ENCODE measurements at regions of chr1 and their contacts with region 1.

Region 1: DNA sequence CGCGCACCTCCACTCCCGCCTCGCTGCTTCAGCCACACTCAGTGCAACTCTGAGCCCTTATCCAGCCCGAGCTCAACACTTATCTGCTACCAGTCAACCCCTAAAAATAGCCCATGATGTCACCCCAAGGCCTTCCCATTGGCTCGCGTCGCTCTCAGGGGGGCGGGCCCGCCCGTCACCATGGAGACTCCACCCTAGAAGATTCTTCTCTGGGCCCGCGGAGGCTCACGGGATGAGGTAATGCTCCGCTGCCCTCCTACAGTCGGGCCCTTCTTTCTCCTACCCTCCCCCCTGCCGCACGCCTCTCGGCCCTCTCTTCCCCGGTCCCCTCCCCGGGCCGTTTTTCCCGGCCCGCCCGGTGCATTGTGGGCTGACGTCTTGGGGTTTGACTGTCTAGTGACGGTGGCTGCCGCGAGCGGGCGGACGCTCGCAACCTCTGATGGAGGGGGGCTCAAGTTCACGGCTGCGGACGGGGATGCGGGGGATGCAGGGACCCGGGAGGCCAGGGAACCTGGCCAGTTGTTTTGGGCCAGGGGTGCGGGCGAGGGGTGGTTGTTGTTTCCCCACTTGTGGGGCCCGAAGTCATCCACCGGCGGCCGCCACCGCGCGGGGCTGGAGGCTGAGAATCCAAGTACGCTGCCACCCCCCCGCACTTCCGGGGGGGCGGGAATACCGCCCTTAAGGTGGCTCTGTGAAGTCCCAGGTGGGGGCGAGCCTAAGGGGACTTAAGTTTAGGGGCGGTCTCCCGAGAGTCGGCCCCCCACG is at the start of gene JUN:
- DNase-seq: peak; percentile 98
- H3K4me3 Mint-ChIP-seq: peak within 1 kb of the TSS; percentile 97
- H3K27ac Mint-ChIP-seq: peak within 1 kb of the TSS; percentile 99
- H3K4me1 Mint-ChIP-seq: peaks cover 41% of the 10 kb centered on the region
- H3K27me3 Mint-ChIP-seq: peaks cover 13% of the 10 kb centered on the region
- CTCF ChIP-seq: no peak
- total RNA-seq, gene JUN: 76.5 and 89.3 TPM in 2 replicates

Region 2: GRCh38 chr1:58619286-58620054 is 164.7 kb before region 1 on chr1:
- CTCF ChIA-PET with region 1: no interaction called
- intact Hi-C with region 1: no loop called
- DNase-seq: no peak
- H3K4me3 Mint-ChIP-seq: peak overlapping the region; percentile 57
- H3K27ac Mint-ChIP-seq: peak overlapping the region; percentile 82
- H3K4me1 Mint-ChIP-seq: peaks cover 63% of the 10 kb centered on the region
- H3K27me3 Mint-ChIP-seq: no peaks in the 10 kb centered on the region
- CTCF ChIP-seq: no peak

Region 3: GRCh38 chr1:58721247-58721820 is 62.8 kb before region 1 on chr1:
- CTCF ChIA-PET with region 1: no interaction called
- intact Hi-C with region 1: no loop called
- DNase-seq: no peak
- H3K4me3 Mint-ChIP-seq: no peak overlapping the region
- H3K27ac Mint-ChIP-seq: no peak overlapping the region
- H3K4me1 Mint-ChIP-seq: peaks cover 9% of the 10 kb centered on the region
- H3K27me3 Mint-ChIP-seq: no peaks in the 10 kb centered on the region
- CTCF ChIP-seq: no peak

Region 4: DNA sequence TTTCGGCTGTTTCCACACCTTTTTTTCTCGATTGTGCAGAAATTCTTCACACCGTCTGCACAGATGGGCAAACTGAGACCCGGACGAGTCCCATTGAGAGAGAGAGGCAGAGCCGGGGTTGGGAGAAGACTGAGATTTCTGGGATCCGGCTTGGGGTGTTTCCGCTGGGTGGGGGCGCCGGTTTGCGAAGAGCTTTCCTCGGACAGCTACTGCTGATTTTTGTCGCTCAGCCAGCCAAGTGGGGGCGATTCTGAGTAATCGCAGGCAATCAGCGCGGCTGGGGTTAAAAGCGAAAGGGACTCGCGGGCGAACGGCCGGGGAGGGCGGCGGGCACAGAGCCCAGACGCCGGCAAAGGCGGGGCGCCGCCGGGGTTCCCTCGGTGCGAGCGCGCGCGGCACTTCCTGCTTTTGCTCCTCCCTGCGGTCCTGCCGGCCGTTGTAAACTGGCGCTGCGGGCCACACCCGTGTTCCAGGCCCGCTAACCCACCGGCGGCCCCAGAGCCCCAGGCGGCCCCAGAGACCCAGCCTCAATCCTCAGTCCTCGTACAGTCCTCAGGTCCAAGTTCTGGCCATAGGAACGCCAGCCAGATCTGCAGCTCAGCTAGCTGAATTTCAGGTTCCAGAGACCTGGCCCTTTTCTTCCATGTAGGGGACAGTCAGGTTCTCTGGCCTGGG is 32.0 kb after region 1 on chr1:
- CTCF ChIA-PET with region 1: interaction called, 10 read pairs
- intact Hi-C with region 1: loop called (anchors 1 kb)
- DNase-seq: peak; percentile 93
- H3K4me3 Mint-ChIP-seq: peak overlapping the region; percentile 85
- H3K27ac Mint-ChIP-seq: peak overlapping the region; percentile 98
- H3K4me1 Mint-ChIP-seq: peaks cover 52% of the 10 kb centered on the region
- H3K27me3 Mint-ChIP-seq: no peaks in the 10 kb centered on the region
- CTCF ChIP-seq: no peak

Region 5: DNA sequence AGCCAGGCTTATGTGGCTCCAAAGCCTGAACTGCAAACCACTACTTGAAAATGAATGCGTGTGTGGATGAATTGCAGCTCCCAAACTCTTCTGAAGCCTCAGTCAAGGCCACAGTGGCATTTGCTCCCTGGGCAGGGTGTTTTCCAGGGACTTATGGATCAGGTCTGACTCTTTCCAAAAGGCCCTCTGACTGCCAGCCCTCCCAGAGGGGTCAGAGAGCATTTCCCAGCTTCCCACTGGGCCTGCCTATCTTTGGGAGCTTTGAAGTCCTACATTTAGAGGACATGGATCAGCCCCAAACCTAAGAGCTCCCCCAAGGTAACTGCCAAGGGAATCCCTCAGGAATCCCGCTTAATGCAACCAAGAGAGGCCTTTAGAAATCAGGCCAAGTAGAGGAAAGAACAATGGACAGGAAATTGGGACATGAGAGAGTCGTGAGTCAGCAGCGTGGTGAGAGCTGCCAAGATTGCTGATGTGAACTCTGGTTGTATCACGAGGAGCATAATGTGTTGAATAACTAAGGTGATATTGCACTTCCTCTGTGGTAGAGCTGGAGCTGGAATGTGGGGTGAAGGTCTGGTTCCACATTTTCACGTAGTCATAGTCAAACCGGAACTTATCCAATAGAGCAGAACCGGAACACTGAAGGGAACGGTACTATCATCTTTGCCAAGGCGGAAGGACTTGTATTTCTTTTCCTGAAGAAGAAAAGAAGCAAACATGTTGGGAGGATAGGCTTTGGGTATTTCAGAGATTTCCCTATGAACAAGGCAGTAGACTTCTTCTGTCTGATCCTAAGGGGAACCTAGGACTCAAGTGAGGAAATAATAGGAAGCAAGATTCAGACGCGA is 99.1 kb after region 1 on chr1:
- CTCF ChIA-PET with region 1: interaction called, 3 read pairs
- intact Hi-C with region 1: loop called (anchors 1 kb)
- DNase-seq: peak; percentile 74
- H3K4me3 Mint-ChIP-seq: peak overlapping the region; percentile 37
- H3K27ac Mint-ChIP-seq: peak overlapping the region; percentile 94
- H3K4me1 Mint-ChIP-seq: peaks cover 72% of the 10 kb centered on the region
- H3K27me3 Mint-ChIP-seq: no peaks in the 10 kb centered on the region
- CTCF ChIP-seq: no peak

Region 6: DNA sequence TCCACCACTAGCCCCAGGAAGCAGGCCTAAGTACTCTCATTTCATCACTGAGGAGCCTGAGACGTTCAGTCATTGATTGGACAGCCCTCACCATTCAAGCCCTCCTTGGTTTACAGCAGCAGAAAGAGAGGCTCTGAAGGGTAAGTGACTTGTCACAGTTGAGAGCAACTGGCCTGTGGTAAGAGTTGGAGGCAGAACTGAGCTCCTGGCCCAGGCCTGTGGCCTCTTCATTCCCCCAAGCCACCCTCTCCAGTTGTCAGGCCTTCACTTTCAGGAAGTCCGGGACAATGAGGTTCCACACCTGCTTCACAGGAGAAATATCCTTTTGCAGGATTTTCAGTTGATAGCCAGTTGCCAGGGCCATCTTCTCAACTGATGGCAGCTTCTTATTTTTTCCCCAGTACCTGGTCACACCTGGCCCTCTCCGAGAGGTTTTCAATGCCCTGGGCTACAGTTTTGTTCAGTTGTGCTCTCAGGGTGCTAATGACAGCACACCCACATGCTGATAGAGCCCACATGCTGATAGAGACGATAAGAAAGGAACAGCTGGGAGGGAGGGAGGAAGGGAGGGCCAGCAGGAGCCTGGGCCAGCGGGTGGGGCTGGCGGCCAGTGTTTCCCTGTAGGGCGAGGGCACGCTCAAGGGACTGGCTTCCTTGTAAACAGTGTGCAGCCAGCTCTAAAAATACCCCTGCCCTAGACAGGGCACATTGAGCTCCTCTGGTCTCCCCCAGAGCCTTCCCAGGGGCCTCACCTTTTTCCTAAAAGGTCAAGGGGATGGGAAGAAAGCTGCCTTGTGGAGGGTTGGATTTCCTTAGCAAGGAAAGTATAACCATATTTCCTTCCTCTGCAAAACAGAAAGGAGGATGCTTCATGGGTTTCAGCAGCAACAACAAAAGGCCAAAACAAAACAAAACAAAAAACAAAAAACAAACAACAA is 112.3 kb after region 1 on chr1:
- CTCF ChIA-PET with region 1: no interaction called
- intact Hi-C with region 1: no loop called
- DNase-seq: peak; percentile 62
- H3K4me3 Mint-ChIP-seq: no peak overlapping the region
- H3K27ac Mint-ChIP-seq: no peak overlapping the region
- H3K4me1 Mint-ChIP-seq: peaks cover 68% of the 10 kb centered on the region
- H3K27me3 Mint-ChIP-seq: no peaks in the 10 kb centered on the region
- CTCF ChIP-seq: no peak

Region 7: GRCh38 chr1:59076612-59077011 is 292.4 kb after region 1 on chr1:
- CTCF ChIA-PET with region 1: no interaction called
- intact Hi-C with region 1: loop called (anchors 5 kb)
- DNase-seq: no peak
- H3K4me3 Mint-ChIP-seq: no peak overlapping the region
- H3K27ac Mint-ChIP-seq: no peak overlapping the region
- H3K4me1 Mint-ChIP-seq: peaks cover 32% of the 10 kb centered on the region
- H3K27me3 Mint-ChIP-seq: no peaks in the 10 kb centered on the region
- CTCF ChIP-seq: no peak

Region 8: DNA sequence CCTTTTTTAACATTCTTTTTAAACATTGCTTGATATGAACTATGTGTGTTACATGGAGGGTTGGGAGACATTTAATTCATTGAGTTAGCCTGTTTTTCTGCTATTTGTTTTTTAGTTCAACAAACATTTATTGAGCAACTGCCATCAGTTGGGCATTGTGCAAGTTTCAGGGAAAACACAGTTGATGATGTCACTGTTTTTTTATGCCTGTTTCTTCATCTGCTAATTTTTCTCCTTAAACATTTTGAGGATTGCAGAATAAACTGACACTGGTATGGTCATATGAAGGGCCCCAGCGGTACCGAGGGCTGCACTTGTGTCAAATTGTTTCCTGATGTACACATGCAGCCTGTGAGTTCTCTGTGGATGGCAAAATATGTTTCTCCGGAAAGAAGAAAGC is 765.7 kb after region 1 on chr1:
- CTCF ChIA-PET with region 1: no interaction called
- intact Hi-C with region 1: loop called (anchors 10 kb)
- DNase-seq: no peak
- H3K4me3 Mint-ChIP-seq: no peak overlapping the region
- H3K27ac Mint-ChIP-seq: no peak overlapping the region
- H3K4me1 Mint-ChIP-seq: peaks cover 28% of the 10 kb centered on the region
- H3K27me3 Mint-ChIP-seq: no peaks in the 10 kb centered on the region
- CTCF ChIP-seq: no peak

Measured in Calu3 (cell line).